ENCODE measurements at regions of chr11 and their contacts with region 1.

Region 1: GRCh38 chr11:43895601-43896000 is 15.0 kb downstream of the ALKBH3 start:
- DNase-seq: peak in 11 of 42 donors; percentile 13 to 67 (median 26)

Region 2: GRCh38 chr11:44036811-44037657 is 141.4 kb after region 1 on chr11:
- intact Hi-C with region 1: loop called (anchors 2 kb)
- DNase-seq: peak; percentile 72 to 96 (median 88)

Region 3: DNA sequence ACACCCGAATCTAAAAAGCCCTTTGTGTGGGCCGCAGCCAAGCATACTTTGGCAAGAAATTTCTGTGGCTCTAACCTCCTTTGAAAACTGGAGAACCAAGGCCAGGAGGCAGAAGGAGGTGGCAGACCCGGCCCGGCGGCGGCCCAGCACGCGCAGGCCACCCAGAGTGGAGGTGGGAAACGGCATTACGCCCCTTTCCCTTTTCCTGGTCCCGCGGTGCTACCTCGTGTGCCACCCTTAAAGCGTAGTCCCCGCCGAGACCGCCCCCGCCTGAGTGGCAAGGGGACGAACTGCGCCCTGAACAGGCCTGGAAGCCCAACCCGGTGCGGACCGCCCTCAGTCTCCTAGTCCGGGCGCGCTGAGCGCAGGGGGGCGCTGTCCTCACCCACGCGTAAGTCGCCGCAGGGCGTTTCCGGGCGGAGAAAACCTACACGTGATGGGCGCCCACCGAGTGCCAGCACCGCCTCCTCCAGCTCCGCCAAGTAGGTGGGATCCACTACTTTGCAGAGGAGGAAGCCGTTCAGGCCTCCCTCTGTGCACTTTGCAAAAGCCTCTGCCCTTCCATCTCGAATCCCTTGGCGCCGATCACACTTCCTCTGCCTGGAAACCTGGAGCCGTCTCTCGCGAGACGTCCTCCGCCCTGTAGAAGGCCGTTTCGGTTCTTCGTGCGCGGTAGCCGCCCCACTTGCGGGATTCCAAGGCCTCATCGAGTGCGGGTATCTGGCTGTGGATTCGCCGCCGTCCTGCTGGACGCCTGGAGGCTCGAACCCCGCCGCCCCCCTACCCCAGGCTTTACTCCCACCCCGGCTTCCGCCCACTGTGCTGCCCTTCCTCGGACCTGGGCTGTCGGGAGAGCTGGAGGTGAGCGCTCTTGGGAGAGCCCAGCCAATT is 170.5 kb after region 1 on chr11 and contains the start of gene ACCS:
- intact Hi-C with region 1: no loop called
- DNase-seq: peak; percentile 78 to 96 (median 90)

Measured in head of caudate nucleus (tissue), 42 donors.